Activated T-helper 2 cell treated with anti-CD3 and anti-CD28 coated beads, Interferon-gamma antibody, Interleukin-2, Interleukin-4, amounts not matched to agents 10 μg/mL and 5 μg/mL and 100 μg/mL, durations not matched to agents 14 hours and 24 hours and 36 hours (primary cell): ENCODE measurements at regions of chrX and their contacts with region 1.

Region 1: GRCh38 chrX:1165535-1166196 is 46.8 kb downstream of the CRLF2 start:
- DNase-seq: no peak
- H3K4me3 Mint-ChIP-seq: peak overlapping the region; percentile 8
- H3K27ac Mint-ChIP-seq: no peak overlapping the region
- H3K4me1 Mint-ChIP-seq: peaks cover 12% of the 10 kb centered on the region
- H3K27me3 Mint-ChIP-seq: peaks cover 12% of the 10 kb centered on the region

Region 2: DNA sequence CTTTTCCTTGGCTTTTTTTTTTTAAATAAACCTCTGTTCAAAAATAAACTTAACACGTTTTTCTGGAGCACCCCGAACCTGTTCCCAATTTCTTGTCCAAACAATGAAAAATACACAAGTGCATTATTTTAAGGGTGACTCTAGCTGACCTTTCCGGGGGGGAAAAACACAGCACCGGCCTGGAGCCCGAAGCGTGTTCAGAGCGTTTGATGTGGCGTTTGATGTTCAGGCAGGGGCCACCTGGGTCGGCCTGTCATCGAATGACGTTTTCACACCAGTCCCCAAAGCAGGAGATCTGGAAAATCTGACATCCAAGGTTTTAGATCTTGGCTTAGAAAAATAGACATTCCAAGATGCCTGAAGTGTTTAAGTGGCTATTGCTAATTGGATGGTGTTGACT is 253.0 kb before region 1 on chrX:
- intact Hi-C with region 1: loop called (anchors 5 kb)
- DNase-seq: no peak
- H3K4me3 Mint-ChIP-seq: no peak overlapping the region
- H3K27ac Mint-ChIP-seq: no peak overlapping the region
- H3K4me1 Mint-ChIP-seq: no peaks in the 10 kb centered on the region
- H3K27me3 Mint-ChIP-seq: no peaks in the 10 kb centered on the region

Region 3: DNA sequence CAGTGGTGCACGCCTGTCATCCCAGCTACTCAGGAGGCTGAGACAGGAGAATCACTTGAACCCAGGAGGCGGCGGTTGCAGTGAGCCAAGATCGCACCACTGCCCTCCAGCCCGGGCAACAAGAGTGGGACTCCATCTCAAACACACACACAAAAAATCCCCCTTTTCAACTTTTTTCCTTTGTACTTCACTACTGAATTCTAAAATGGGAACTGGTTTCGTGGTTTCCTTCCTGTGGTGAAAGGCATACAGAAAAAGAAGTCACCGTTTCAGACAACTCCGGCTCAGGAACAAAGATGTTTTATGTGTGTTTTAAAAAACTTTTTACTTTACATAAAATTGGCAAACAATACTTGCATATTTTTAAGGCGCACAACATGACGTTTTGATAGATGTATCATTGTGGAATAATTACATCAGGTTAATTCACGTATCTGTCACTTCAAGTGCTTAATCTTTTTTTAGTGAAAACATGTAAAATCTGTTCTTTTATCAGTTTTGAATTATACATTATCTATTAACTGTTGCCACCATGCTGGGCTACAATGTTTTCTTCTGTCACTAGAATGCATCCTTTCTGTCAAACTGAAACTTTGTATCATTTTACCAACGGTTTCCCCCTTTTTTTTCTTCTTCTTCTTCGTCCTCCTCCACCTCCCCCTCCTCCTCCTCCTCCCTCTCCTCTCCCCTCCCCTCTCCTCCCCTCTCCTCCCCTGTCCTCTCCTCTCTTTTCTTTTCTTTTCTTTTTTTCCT is 139.2 kb before region 1 on chrX:
- intact Hi-C with region 1: no loop called
- DNase-seq: no peak
- H3K4me3 Mint-ChIP-seq: peak overlapping the region; percentile 47
- H3K27ac Mint-ChIP-seq: no peak overlapping the region
- H3K4me1 Mint-ChIP-seq: peaks cover 12% of the 10 kb centered on the region
- H3K27me3 Mint-ChIP-seq: no peaks in the 10 kb centered on the region

Region 4: GRCh38 chrX:1072637-1073377 is 92.9 kb before region 1 on chrX:
- intact Hi-C with region 1: loop called (anchors 10 kb)
- DNase-seq: no peak
- H3K4me3 Mint-ChIP-seq: no peak overlapping the region
- H3K27ac Mint-ChIP-seq: no peak overlapping the region
- H3K4me1 Mint-ChIP-seq: no peaks in the 10 kb centered on the region
- H3K27me3 Mint-ChIP-seq: peaks cover 4% of the 10 kb centered on the region